AG04450 (cell line): ENCODE measurements at regions of chr11 and their contacts with region 1.

Region 1: GRCh38 chr11:85045716-85046115 is 581.4 kb downstream of the DLG2 start:
- DNase-seq: no peak
- H3K4me3 ChIP-seq: no peak overlapping the region
- H3K27ac ChIP-seq: no peak overlapping the region
- H3K27me3 ChIP-seq: no peaks in the 10 kb centered on the region
- CTCF ChIP-seq: no peak

Region 2: GRCh38 chr11:84930863-84931262 is 114.9 kb before region 1 on chr11:
- CTCF ChIA-PET with region 1: interaction called, 10 read pairs
- POLR2A ChIA-PET with region 1: no interaction called
- DNase-seq: no peak
- H3K4me3 ChIP-seq: no peak overlapping the region
- H3K27ac ChIP-seq: no peak overlapping the region
- H3K27me3 ChIP-seq: no peaks in the 10 kb centered on the region
- CTCF ChIP-seq: no peak